GM12878 (cell line): ENCODE measurements at regions of chr7 and their contacts with region 1.

Region 1: DNA sequence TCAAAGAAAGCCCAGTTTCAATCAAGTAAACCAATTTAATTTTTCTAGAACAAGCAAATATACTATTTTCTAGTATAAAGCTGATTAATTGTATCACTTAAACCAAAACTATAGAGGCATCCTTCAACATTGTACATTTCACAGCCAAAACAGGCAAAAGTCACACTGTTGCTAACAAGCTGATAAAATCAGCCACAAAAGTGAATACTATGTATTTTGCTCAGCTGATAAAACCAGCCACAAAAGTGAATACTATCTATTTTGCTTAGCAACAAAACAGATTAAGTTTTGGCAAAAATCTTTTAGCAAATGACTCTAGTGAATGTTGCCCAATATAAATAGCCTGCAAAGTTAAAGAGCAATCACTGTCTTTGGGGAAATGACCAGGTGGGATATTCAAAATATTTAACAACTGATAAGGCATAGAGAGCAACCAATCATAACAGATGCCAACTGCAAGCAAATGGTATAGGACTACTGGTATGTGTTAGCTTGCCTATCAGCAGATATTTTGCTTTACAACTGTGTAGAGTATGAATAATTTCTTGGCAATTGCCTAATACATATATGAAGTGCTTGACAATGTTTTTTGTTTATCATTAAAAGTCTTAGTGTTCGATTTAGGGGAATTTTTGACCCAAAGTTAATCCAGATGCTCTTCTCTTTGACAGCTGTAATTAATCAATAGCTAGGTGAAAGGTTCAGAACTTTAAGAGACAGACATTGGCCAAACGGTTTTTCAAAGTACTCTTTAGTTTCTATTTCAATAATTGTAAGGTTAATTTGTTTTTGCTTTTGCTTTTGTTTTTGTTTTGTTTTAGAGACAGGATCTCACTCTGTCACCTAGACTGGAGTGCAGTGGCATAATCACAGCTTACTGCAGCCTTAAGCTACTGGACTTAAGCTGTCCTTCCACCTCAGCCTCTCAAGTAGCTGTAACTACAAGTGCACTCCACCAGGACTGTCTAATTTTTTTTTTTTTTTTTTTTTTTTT is 44.4 kb upstream of the SP4 start:
- DNase-seq: no peak
- ATAC-seq: peak; percentile 88
- H3K4me3 ChIP-seq: no peak overlapping the region
- H3K27ac ChIP-seq: peak overlapping the region; percentile 72
- H3K4me1 ChIP-seq: peaks cover 13% of the 10 kb centered on the region
- H3K27me3 ChIP-seq: no peaks in the 10 kb centered on the region
- CTCF ChIP-seq: no peak
- EP300 ChIP-seq: no peak
- POLR2A ChIP-seq: no peak
- RAD21 ChIP-seq: no peak

Region 2: DNA sequence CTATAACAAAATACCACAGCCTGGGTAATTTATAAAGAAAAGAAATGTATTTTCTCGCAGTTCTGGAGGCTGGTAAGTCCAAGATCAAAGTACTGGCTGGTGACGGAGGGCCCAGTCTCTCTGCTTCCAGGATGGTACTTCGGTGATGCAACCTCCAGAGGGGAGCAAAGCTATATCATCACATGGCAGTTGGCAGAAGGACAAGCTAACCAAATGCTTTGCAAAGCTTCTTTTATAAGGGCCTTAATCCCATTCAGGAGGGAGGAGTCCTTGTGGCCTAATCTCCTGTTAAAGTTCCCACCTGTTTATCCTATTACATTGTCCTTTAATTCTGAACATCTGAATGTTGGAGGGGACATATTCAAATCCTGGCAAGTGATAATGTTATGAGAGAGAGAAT is 89.8 kb before region 1 on chr7:
- CTCF ChIA-PET with region 1: no interaction called
- POLR2A ChIA-PET with region 1: interaction called, 10 read pairs
- RAD21 ChIA-PET with region 1: no interaction called
- SMC1A ChIA-PET with region 1: no interaction called
- in situ Hi-C with region 1: no loop called
- intact Hi-C with region 1: no loop called
- DNase-seq: no peak
- ATAC-seq: no peak
- H3K4me3 ChIP-seq: no peak overlapping the region
- H3K27ac ChIP-seq: no peak overlapping the region
- H3K4me1 ChIP-seq: no peaks in the 10 kb centered on the region
- H3K27me3 ChIP-seq: no peaks in the 10 kb centered on the region
- CTCF ChIP-seq: no peak
- EP300 ChIP-seq: no peak
- POLR2A ChIP-seq: no peak
- RAD21 ChIP-seq: peak; percentile 30

Region 3: DNA sequence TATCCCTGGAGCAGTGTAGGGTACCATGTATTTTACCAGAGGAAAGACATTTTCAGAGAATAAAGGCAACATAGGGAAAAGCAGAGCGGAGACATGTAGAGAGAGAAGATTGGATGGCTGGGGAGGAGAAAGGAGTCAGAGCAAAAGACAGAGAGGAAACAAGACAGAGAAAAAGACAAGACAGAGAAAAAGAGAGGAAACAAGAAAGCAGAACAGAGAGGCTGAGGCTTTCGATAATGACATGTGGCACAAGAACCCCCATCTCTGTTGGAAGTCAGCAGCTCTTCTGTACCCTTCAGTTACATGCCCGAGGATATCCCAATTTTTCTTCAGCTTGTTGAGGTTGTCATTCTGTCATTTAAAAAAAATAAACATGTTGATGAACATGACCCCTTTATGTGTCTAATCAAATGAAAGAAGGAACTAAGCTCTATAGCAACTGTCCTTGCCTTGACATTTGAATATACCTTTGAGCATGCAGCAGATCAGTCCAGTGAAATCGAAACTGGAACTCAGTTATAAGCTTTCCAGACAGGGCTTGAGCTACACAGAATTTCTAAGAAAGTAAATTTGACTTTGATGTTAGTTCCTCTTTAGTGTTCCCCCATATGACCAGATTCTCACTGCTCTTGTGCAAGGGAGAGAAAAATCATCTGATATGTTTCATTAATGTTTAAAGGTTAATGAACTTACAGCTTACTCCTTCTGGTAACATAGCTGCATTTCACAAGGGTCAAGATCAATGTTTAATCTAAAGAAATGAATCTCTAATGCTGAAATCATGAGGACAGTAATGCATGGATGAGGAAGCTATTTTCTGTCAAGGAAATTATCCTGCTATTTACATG is 30.8 kb before region 1 on chr7:
- CTCF ChIA-PET with region 1: interaction called, 6 read pairs
- POLR2A ChIA-PET with region 1: interaction called, 7 read pairs
- RAD21 ChIA-PET with region 1: interaction called, 31 read pairs
- SMC1A ChIA-PET with region 1: interaction called, 40 read pairs
- in situ Hi-C with region 1: no loop called
- intact Hi-C with region 1: no loop called
- DNase-seq: peak; percentile 93
- ATAC-seq: peak; percentile 86
- H3K4me3 ChIP-seq: peak overlapping the region; percentile 43
- H3K27ac ChIP-seq: peak overlapping the region; percentile 85
- H3K4me1 ChIP-seq: peaks cover 38% of the 10 kb centered on the region
- H3K27me3 ChIP-seq: no peaks in the 10 kb centered on the region
- CTCF ChIP-seq: no peak
- EP300 ChIP-seq: peak; percentile 23 to 83; a peak in 3 of 4 replicates
- POLR2A ChIP-seq: no peak
- RAD21 ChIP-seq: peak; percentile 30; the same call in 1 of the 2 replicates

Region 4: GRCh38 chr7:21358648-21359047 is 24.9 kb before region 1 on chr7:
- CTCF ChIA-PET with region 1: interaction called, 6 read pairs
- POLR2A ChIA-PET with region 1: interaction called, 3 read pairs
- RAD21 ChIA-PET with region 1: interaction called, 31 read pairs
- SMC1A ChIA-PET with region 1: interaction called, 40 read pairs
- in situ Hi-C with region 1: no loop called
- intact Hi-C with region 1: no loop called
- DNase-seq: no peak
- ATAC-seq: no peak
- H3K4me3 ChIP-seq: no peak overlapping the region
- H3K27ac ChIP-seq: no peak overlapping the region; the same call in 1 of the 2 replicates
- H3K4me1 ChIP-seq: peaks cover 38% of the 10 kb centered on the region
- H3K27me3 ChIP-seq: no peaks in the 10 kb centered on the region
- CTCF ChIP-seq: no peak
- EP300 ChIP-seq: no peak
- POLR2A ChIP-seq: no peak
- RAD21 ChIP-seq: no peak

Region 5: DNA sequence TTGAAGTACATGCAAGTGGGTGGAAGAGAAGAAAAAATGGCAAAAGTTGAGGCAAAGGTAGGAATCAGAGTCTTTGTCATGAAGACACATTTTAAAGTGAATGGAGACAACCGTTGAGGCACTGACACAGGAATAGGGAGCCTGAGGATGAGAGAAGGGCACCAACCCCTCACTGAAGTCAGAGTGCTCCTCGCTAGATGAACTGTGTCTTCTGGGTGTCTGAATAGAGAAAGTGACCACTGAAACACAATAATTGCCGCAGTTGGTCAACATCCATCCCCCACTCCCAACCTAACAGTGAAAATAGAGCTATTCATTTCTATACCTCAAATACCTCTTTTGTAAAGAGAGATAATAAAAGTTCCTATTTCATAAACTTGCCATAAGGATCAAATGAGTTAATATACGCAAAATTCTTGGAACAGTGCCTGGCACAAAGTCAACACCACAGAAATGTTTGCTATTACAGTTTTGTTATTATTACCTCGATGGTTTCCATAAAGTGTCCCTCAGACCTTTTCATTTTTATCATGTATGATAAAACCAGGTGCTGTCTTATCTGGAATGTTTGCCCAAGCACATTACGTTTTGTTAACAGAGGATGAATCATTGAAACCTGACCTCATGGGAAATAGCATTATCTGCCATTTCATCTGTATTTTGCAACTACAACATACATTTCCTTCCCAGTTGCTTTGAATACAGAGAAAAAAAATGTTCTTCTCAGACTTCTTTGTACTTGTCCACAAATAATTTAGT is 17.5 kb before region 1 on chr7:
- CTCF ChIA-PET with region 1: interaction called, 6 read pairs
- POLR2A ChIA-PET with region 1: interaction called, 6 read pairs
- RAD21 ChIA-PET with region 1: interaction called, 13 read pairs
- SMC1A ChIA-PET with region 1: interaction called, 30 read pairs
- in situ Hi-C with region 1: no loop called
- intact Hi-C with region 1: no loop called
- DNase-seq: no peak
- ATAC-seq: no peak
- H3K4me3 ChIP-seq: no peak overlapping the region
- H3K27ac ChIP-seq: no peak overlapping the region; the same call in 1 of the 2 replicates
- H3K4me1 ChIP-seq: peaks cover 21% of the 10 kb centered on the region
- H3K27me3 ChIP-seq: no peaks in the 10 kb centered on the region
- CTCF ChIP-seq: no peak
- EP300 ChIP-seq: no peak
- POLR2A ChIP-seq: no peak
- RAD21 ChIP-seq: no peak

Region 6: DNA sequence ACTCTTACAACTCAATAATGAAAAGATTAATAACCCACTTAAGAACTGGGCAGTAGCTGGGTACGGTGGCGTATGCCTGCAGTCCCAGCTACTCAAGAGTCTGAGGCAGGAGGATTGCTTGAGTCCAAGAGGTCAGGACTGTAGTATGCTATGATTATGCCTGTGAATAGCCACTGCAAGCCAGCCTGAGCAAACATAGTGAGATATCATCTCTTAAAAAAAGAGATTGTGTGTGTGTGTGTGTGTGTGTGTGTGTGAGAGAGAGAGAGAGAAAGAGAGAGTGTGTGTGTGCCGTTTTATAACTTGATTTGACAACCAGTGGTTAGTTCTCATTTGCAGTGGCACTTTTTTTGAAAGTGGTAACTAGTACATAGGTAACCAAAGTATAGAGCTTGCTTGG is 17.1 kb after region 1 on chr7:
- CTCF ChIA-PET with region 1: no interaction called
- POLR2A ChIA-PET with region 1: no interaction called
- RAD21 ChIA-PET with region 1: interaction called, 3 read pairs
- SMC1A ChIA-PET with region 1: interaction called, 15 read pairs
- in situ Hi-C with region 1: no loop called
- intact Hi-C with region 1: no loop called
- DNase-seq: no peak
- ATAC-seq: no peak
- H3K4me3 ChIP-seq: no peak overlapping the region
- H3K27ac ChIP-seq: no peak overlapping the region
- H3K4me1 ChIP-seq: no peaks in the 10 kb centered on the region
- H3K27me3 ChIP-seq: no peaks in the 10 kb centered on the region
- CTCF ChIP-seq: no peak
- EP300 ChIP-seq: no peak
- POLR2A ChIP-seq: no peak
- RAD21 ChIP-seq: no peak

Region 7: DNA sequence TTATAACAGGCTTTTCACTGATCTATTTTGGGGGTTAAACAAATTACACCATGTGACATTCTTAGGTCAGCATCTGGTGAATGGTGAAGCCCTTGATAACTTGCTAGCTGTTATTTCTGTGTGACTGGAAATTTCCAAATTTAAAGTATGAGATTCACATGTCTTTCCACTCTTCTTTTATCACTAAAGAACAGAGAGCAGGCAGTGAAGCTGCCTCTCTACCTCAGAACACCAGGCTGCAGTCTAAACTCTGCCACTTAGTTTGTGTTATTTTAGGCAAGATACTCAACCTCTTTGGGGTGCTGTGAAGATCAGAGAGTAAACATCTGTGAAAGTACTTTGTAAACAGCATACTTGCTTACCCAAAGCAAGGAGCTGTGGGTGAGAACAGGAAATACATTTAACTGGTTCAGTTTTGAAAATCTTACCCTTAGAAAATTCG is 28.9 kb after region 1 on chr7:
- CTCF ChIA-PET with region 1: interaction called, 8 read pairs
- POLR2A ChIA-PET with region 1: interaction called, 5 read pairs
- RAD21 ChIA-PET with region 1: interaction called, 14 read pairs
- SMC1A ChIA-PET with region 1: interaction called, 20 read pairs
- in situ Hi-C with region 1: no loop called
- intact Hi-C with region 1: no loop called
- DNase-seq: peak; percentile 43
- ATAC-seq: peak; percentile 79
- H3K4me3 ChIP-seq: no peak overlapping the region
- H3K27ac ChIP-seq: peak overlapping the region; percentile 70
- H3K4me1 ChIP-seq: peaks cover 11% of the 10 kb centered on the region
- H3K27me3 ChIP-seq: no peaks in the 10 kb centered on the region
- CTCF ChIP-seq: no peak
- EP300 ChIP-seq: no peak
- POLR2A ChIP-seq: no peak
- RAD21 ChIP-seq: 0 out of 2 replicates have a peak, but pooled peaks have one; percentile 1